ENCODE measurements at regions of chr4 and their contacts with region 1.

Region 1: DNA sequence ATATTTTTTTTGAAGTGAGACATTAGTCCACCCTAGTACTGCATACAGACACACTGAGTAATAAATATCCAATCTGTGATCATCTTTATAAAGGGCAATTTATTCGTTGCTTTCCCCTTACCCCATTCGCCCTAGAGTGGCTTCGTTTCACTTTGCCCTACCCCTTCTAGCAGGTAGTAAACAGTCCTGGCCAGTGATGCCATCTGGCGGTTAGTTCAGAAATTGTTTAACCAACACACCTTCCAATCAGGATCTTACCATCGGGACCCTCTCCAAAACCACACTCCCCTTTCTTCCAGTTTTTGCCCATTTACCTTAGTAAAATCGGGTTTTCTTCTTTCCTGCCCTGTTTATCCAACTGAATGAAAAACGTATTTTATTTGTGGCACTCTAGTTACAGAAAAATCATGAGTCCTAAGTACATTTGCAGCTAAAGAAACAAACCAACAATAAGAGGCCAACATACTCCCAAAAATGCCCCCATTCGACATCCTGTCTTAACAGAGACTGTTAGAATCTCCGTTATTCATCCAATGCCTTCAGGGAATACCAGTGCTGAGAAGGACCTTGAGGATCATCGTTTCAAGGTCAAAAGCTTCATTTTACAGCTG is 2.2 kb downstream of the PPA2 start:
- DNase-seq: peak; percentile 75
- ATAC-seq: peak; percentile 44
- H3K4me3 ChIP-seq: peak overlapping the region; percentile 69 to 88 (median 73)
- H3K27ac ChIP-seq: peak overlapping the region; percentile 86
- H3K4me1 ChIP-seq: peaks cover 24% of the 10 kb centered on the region
- H3K27me3 ChIP-seq: no peaks in the 10 kb centered on the region; a peak in 1 of 5 replicates
- CTCF ChIP-seq: peak; percentile 88
- EP300 ChIP-seq: no peak
- POLR2A ChIP-seq: no peak
- RAD21 ChIP-seq: peak; percentile 58; the same call in 1 of the 2 replicates

Region 2: DNA sequence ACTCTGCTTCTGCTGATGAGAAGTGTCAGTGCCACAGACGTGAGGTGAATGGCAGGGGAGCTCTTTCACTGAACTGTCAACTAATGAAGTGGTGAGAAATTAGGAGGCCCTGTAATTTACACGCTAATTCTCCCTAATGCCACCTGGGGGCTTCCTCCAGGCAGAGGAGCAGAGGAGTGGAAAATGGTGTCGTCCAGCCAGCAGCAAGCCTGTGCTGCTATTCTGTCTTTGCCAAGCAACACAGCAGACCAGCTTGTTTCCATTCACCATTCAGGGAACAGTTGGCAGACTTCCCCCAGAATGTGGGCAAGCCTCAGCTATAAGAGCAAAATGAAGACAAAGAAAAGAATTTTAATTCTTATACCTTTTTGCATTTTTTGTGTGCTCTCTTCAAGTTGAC is 570.2 kb before region 1 on chr4:
- CTCF ChIA-PET with region 1: no interaction called
- POLR2A ChIA-PET with region 1: no interaction called
- in situ Hi-C with region 1: loop called (anchors 25 kb)
- intact Hi-C with region 1: no loop called
- DNase-seq: no peak
- ATAC-seq: peak; percentile 61
- H3K4me3 ChIP-seq: no peak overlapping the region
- H3K27ac ChIP-seq: no peak overlapping the region
- H3K4me1 ChIP-seq: no peaks in the 10 kb centered on the region
- H3K27me3 ChIP-seq: no peaks in the 10 kb centered on the region
- CTCF ChIP-seq: no peak
- EP300 ChIP-seq: no peak
- POLR2A ChIP-seq: no peak
- RAD21 ChIP-seq: no peak

Region 3: GRCh38 chr4:105140684-105141490 is 330.8 kb before region 1 on chr4:
- CTCF ChIA-PET with region 1: interaction called, 53 read pairs
- POLR2A ChIA-PET with region 1: interaction called, 8 read pairs
- in situ Hi-C with region 1: loop called (anchors 5 kb)
- intact Hi-C with region 1: loop called (anchors 1 kb)
- DNase-seq: peak; percentile 54
- ATAC-seq: peak; percentile 73
- H3K4me3 ChIP-seq: no peak overlapping the region
- H3K27ac ChIP-seq: no peak overlapping the region
- H3K4me1 ChIP-seq: peaks cover 20% of the 10 kb centered on the region
- H3K27me3 ChIP-seq: no peaks in the 10 kb centered on the region; a peak in 1 of 5 replicates
- CTCF ChIP-seq: peak; percentile 81
- EP300 ChIP-seq: no peak
- POLR2A ChIP-seq: no peak
- RAD21 ChIP-seq: peak; percentile 77

Region 4: GRCh38 chr4:105246712-105247111 is 225.0 kb before region 1 on chr4:
- CTCF ChIA-PET with region 1: no interaction called
- POLR2A ChIA-PET with region 1: no interaction called
- in situ Hi-C with region 1: no loop called
- intact Hi-C with region 1: loop called (anchors 5 kb)
- DNase-seq: no peak
- ATAC-seq: no peak
- H3K4me3 ChIP-seq: no peak overlapping the region
- H3K27ac ChIP-seq: no peak overlapping the region
- H3K4me1 ChIP-seq: no peaks in the 10 kb centered on the region
- H3K27me3 ChIP-seq: no peaks in the 10 kb centered on the region
- CTCF ChIP-seq: no peak
- EP300 ChIP-seq: no peak
- POLR2A ChIP-seq: no peak
- RAD21 ChIP-seq: no peak

Region 5: GRCh38 chr4:105417624-105418023 is 54.0 kb before region 1 on chr4:
- CTCF ChIA-PET with region 1: no interaction called
- POLR2A ChIA-PET with region 1: interaction called, 12 read pairs
- in situ Hi-C with region 1: no loop called
- intact Hi-C with region 1: loop called (anchors 5 kb)
- DNase-seq: peak; percentile 85
- ATAC-seq: peak; percentile 92
- H3K4me3 ChIP-seq: no peak overlapping the region
- H3K27ac ChIP-seq: no peak overlapping the region
- H3K4me1 ChIP-seq: peaks cover 22% of the 10 kb centered on the region
- H3K27me3 ChIP-seq: no peaks in the 10 kb centered on the region
- CTCF ChIP-seq: no peak
- EP300 ChIP-seq: peak; percentile 31 to 72; a peak in 2 of 4 replicates
- POLR2A ChIP-seq: no peak
- RAD21 ChIP-seq: no peak

Region 6: DNA sequence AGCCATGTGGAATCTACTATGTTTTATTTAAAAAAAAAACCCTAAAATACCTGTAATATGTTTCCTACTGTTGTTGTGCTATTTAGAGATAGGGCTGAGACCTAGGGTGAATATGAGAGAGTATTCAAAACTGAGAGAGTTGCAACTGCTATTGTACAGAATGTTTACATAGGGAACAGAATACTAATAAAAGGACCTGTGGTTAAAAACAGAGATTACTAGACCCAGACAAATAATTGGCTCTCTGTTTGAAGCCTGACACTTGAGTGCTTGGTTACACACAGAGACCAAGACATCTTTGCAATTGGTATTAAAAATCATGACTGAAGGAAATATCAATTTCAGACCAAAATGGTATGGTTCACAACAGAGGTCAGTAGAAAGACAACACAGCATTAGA is 1175.8 kb after region 1 on chr4:
- CTCF ChIA-PET with region 1: no interaction called
- POLR2A ChIA-PET with region 1: no interaction called
- in situ Hi-C with region 1: no loop called
- intact Hi-C with region 1: no loop called
- DNase-seq: no peak
- ATAC-seq: no peak
- H3K4me3 ChIP-seq: no peak overlapping the region
- H3K27ac ChIP-seq: no peak overlapping the region
- H3K4me1 ChIP-seq: no peaks in the 10 kb centered on the region
- H3K27me3 ChIP-seq: no peaks in the 10 kb centered on the region
- CTCF ChIP-seq: no peak
- EP300 ChIP-seq: no peak
- POLR2A ChIP-seq: no peak
- RAD21 ChIP-seq: no peak